ENCODE measurements at regions of chr10 and their contacts with region 1.

Region 1: DNA sequence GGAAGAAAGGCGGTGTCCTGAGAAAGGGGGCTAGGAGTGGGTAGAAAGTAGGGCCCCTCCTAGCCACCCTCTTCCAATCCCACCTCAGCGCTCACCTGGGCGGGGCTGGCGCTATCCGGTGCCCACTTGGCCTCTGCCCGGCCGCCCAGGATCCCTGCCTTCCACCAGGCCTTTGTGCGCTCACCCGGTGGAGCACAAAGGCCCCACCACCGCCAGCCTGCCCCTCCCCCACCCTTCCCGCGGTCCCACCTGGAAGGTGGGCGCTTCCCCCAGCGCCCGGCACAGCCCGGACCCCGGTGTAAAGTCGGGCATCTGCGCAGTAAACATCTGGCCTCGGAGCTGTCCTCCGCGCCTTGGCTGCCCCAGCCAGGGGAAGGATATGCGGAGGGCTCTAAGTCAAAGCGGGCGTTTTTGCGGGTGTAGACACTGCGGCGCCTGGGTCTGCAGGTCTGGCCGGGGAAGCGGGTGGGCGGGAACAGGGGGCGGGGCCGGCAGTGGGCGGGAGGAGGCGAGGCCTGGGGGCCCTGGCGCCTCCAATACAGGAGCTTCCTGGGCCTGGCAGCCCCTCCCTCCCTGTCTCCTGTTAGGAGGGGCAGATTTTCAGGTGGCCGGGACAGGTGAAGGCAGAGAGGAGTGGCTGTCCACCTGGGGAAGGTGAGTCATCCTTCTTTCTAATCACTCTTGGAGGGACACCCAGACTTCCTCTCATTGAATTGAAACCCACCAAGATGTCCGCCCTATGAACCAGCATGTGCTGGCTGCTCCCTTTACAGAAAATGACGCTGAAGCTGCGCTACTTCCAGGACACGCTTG is 49.3 kb downstream of the PNLIPRP2 start:
- DNase-seq: peak in 1 of 2 experiments; percentile 80
- H3K4me3 ChIP-seq: peak overlapping the region; percentile 68 to 89 (median 78)
- H3K27ac ChIP-seq: peak overlapping the region; percentile 75; the same call in 1 of the 2 replicates
- H3K4me1 ChIP-seq: peaks cover 0 to 14% (median 11%) of the 10 kb centered on the region in 4 experiments; a peak in 6 of 7 replicates
- H3K27me3 ChIP-seq: no peaks in the 10 kb centered on the region
- CTCF ChIP-seq: no peak
- EP300 ChIP-seq: no peak
- POLR2A ChIP-seq: peak in 1 of 2 experiments; percentile 86; a peak in 2 of 3 replicates
- RAD21 ChIP-seq: no peak

Region 2: GRCh38 chr10:116654816-116655215 is 15.2 kb before region 1 on chr10:
- CTCF ChIA-PET with region 1: interaction called, 15 read pairs
- POLR2A ChIA-PET with region 1: interaction called, 10 read pairs
- DNase-seq: no peak
- H3K4me3 ChIP-seq: no peak overlapping the region
- H3K27ac ChIP-seq: no peak overlapping the region
- H3K4me1 ChIP-seq: no peaks in the 10 kb centered on the region
- H3K27me3 ChIP-seq: no peaks in the 10 kb centered on the region
- CTCF ChIP-seq: peak; percentile 43 to 66 (median 47)
- EP300 ChIP-seq: no peak
- POLR2A ChIP-seq: no peak
- RAD21 ChIP-seq: peak; percentile 37 to 42

Region 3: DNA sequence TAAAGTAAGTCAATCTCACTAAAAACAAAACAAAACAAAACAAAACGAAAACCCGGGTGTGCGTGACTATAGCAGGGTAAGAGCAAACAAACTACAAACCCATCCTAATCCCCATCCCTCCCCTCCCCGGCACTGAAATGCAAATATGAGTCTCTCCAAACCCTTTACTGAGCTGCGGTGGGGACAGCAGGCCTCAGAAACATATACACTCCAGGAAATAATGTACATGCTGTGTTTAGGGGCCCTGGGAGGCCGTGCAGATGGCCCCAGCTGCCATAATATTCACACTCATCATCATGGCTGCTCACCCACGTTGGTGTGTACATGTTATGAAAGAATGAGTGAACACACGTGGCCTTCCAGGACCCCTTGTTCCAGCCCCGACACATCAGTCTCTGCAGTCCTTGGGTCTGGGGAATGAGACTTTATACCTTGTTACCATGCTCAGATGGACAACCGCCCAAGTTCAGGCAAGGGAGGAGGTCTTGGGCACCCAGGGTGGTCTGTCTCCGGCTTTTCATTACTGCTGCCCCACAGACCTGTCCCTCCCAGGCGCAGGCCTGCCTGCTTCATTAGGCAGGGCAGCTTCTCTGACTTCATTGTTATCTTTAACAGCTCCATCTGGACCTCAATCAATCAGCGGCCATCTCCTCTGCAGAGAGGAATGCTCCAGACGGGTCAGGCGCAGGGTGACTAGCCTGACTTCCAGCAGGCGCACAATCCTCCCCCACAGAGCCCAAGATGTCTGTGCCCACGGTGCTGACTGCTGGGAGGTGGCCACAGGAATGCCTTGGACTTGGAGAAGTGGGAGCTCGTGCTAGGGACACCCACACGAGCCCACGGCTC is 51.7 kb after region 1 on chr10:
- CTCF ChIA-PET with region 1: no interaction called
- POLR2A ChIA-PET with region 1: no interaction called
- DNase-seq: no peak
- H3K4me3 ChIP-seq: no peak overlapping the region
- H3K27ac ChIP-seq: no peak overlapping the region
- H3K4me1 ChIP-seq: peaks cover 0 to 2% (median 0%) of the 10 kb centered on the region in 4 experiments; a peak in 1 of 7 replicates
- H3K27me3 ChIP-seq: no peaks in the 10 kb centered on the region
- CTCF ChIP-seq: no peak
- EP300 ChIP-seq: no peak
- POLR2A ChIP-seq: no peak
- RAD21 ChIP-seq: no peak

Measured in H1 (cell line).